ENCODE measurements at regions of chr12 and their contacts with region 1.

Region 1: GRCh38 chr12:71746983-71747611 is 7.6 kb upstream of the RAB21 start:
- DNase-seq: peak; percentile 53
- CTCF ChIP-seq: peak; percentile 89

Region 2: GRCh38 chr12:71415336-71416231 is 331.5 kb before region 1 on chr12:
- in situ Hi-C with region 1: loop called (anchors 25 kb)
- DNase-seq: peak; percentile 61
- CTCF ChIP-seq: peak; percentile 85

Region 3: DNA sequence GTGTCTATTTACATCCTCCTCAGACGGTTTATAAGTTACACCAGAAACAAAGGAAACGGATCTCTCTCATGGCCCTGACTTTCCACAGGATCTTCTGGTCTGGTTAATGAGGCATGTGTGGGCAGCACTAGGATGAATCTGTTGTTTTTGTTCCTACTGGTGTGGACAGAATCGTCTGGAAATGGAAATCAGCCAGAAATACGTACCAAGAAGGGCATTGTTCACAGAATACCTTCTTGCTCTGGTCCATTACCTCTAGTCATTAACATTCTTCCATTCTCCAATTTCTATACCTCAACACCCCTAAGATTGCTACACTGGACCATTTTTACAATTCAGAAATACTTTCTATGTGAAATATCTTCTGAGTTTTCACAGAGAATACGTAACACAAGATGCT is 277.5 kb after region 1 on chr12:
- in situ Hi-C with region 1: no loop called
- DNase-seq: no peak
- CTCF ChIP-seq: no peak